Left cardiac atrium (tissue), 4 donors: ENCODE measurements at regions of chr12 and their contacts with region 1.

Region 1: GRCh38 chr12:110698171-110698902 is 9.4 kb upstream of the HVCN1 start:
- DNase-seq: peak; percentile 84
- ATAC-seq: peak; percentile 85 to 87

Region 2: DNA sequence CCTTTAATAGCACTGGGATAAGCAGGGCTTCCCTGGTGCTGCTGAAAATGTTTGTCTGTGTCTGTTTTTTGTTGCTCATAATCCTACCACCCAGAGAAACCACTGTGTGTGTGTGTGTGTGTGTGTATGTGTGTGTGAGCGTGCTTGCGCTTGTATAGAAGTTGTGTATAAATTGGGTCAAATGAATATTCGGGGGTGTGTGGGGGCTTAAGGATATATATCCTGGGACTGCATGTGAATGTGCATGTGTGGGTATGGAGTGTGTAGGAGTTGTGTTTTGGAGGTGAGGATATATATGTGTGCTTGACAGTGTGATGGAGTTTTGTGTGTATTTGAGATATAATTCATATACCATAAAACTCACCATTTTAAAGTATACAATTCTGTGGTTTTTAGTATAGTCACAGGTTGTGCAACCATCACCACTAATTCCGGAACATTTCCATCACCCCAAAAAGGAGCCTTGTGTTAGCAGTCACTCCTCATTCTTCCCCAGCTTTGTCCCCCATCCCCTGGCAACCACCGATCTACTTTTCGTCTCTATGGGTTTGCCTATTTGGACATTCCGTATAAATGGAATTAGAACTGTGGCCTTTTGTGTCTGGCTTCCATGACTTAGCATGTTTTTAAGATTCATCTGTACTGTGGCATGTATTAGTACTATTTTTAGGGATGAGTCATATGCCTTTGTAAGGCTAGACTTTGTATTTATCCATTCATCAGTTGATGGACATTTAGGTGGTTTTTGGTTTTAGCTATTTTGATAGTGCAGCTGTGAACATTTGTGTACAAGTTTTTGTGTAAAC is 58.8 kb before region 1 on chr12:
- intact Hi-C with region 1: loop called in 1 of 2 experiments (anchors 2 kb)
- DNase-seq: no peak
- ATAC-seq: peak in 1 of 2 donors; percentile 56

Region 3: DNA sequence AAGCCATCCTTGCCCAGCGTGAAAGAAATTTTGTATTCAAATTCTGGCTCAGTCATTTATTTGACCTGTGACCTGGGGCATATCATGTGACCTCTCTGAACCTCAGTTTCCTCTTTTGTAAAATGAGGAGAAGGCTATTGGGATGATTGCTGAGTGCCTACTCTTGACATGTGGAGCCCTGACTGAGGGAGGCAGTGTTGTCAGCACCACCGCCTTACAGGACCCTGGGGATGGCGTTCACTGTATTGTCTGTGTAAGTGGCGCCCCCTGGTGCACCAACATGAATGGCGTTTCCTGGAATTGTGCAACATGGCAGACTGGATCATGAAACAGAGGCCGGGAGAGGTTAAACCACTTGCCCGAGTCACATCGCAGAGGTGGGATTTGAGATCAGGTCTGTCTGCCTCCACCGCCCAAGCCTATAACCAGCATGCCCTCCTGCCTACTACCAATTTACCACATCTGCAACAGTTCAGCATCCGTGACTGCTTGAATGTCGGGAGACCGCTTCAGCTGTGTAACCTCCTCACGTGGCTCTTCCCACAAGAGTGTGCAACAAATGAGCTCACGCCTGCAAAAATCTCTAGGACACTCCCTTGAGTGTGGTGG is 128.4 kb after region 1 on chr12:
- intact Hi-C with region 1: loop called in 1 of 2 experiments (anchors 5 kb)
- DNase-seq: peak; percentile 87
- ATAC-seq: peak; percentile 97